H1 (cell line): ENCODE measurements at regions of chr5 and their contacts with region 1.

Region 1: GRCh38 chr5:170497100-170498038 is 6.5 kb upstream of the KCNIP1 start:
- DNase-seq: no peak
- H3K4me3 ChIP-seq: no peak overlapping the region
- H3K27ac ChIP-seq: no peak overlapping the region
- H3K4me1 ChIP-seq: peaks cover 0 to 2% (median 0%) of the 10 kb centered on the region in 4 experiments; a peak in 3 of 7 replicates
- H3K27me3 ChIP-seq: no peaks in the 10 kb centered on the region
- CTCF ChIP-seq: no peak
- EP300 ChIP-seq: no peak
- POLR2A ChIP-seq: no peak
- RAD21 ChIP-seq: no peak

Region 2: GRCh38 chr5:170483706-170484477 is 13.5 kb before region 1 on chr5:
- CTCF ChIA-PET with region 1: interaction called, 16 read pairs
- POLR2A ChIA-PET with region 1: no interaction called
- DNase-seq: no peak
- H3K4me3 ChIP-seq: no peak overlapping the region
- H3K27ac ChIP-seq: no peak overlapping the region
- H3K4me1 ChIP-seq: peaks cover 0 to 4% (median 0%) of the 10 kb centered on the region in 4 experiments; a peak in 1 of 7 replicates
- H3K27me3 ChIP-seq: no peaks in the 10 kb centered on the region; a peak in 2 of 7 replicates
- CTCF ChIP-seq: no peak
- EP300 ChIP-seq: no peak
- POLR2A ChIP-seq: no peak
- RAD21 ChIP-seq: no peak